Dorsolateral prefrontal cortex (tissue), 120 donors: ENCODE measurements at regions of chr2 and their contacts with region 1.

Region 1: DNA sequence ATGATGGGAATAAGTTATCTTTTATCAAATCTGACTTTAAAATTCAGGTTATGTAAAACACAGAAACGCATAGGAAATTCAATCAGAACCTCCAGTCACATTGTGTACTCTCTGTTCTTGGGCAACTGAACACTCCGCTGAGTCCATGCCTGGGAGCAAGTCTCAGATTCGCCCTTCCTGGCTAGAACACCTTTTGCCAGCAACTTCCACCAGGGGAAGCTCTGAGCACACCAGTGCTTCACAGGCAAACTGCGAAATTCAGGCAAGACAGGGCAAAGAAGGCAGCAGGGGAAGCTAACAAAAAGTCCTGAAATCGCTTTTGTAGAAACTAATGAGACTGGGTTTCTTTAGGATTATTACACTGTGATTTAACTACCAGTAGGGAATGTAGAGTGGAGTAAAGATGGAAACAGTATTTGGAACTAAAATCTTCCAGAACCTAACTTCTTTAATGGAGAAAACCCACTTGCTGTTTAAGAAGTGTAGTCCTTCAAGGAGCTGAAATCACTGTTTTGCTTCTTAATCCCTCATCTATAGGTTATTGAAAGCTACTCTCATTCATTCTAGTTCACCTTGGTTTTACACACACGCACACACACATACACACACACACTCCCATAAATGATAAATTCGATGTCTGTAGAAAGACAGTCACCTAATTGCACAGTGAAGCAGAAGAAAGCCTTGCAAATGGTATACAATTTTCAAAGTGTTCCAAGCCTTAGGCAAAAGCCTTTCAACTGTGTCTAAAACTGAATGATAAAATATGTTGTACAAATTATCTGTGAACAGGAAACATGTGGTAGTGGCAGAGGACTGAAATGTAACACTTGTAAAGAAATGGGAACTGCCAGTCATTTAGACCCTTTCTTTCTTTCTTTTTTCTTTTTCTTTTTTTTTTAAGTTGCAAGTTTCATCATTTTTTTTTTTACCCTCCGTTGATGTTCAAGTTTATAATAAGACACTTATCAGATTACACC is 214.5 kb downstream of the TMEM182 start:
- DNase-seq: peak in 9 of 10 donors; percentile 23 to 64 (median 55)
- H3K4me3 ChIP-seq: no peak overlapping the region
- H3K27ac ChIP-seq: peak overlapping the region in 4 of 59 donors; percentile 12 to 56 (median 35)
- H3K27me3 ChIP-seq: no peaks in the 10 kb centered on the region
- CTCF ChIP-seq: peak; percentile 19 to 76 (median 60)

Region 2: DNA sequence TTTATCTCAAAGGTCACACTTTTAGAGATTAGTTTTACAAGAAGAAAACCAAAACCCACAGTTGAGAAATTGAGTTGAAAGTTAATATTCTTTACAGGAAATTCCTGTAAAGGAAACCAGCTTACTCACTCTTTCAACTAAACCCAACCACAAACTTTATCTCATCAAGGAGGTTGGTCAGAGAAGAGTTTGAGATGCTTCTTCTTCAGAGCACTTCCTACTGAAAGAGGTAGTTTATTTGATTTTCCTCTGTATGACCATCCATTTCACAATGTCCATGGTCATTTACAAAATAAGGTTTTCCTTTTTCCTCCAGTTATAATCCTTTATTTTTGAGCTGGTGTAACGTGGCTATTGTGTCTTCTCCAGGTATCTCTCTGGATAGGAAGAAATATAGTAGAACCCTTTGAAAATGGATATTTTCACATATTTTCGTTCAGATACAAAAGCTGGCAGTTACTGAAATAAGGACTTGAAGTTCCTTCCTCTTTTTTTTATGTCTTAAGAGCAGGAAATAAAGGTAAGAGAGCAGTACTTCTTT is 557.8 kb before region 1 on chr2:
- intact Hi-C with region 1: no loop called
- DNase-seq: no peak
- H3K4me3 ChIP-seq: no peak overlapping the region
- H3K27ac ChIP-seq: no peak overlapping the region
- H3K27me3 ChIP-seq: peaks cover 0 to 16% (median 0%) of the 10 kb centered on the region in 45 donors
- CTCF ChIP-seq: no peak

Region 3: DNA sequence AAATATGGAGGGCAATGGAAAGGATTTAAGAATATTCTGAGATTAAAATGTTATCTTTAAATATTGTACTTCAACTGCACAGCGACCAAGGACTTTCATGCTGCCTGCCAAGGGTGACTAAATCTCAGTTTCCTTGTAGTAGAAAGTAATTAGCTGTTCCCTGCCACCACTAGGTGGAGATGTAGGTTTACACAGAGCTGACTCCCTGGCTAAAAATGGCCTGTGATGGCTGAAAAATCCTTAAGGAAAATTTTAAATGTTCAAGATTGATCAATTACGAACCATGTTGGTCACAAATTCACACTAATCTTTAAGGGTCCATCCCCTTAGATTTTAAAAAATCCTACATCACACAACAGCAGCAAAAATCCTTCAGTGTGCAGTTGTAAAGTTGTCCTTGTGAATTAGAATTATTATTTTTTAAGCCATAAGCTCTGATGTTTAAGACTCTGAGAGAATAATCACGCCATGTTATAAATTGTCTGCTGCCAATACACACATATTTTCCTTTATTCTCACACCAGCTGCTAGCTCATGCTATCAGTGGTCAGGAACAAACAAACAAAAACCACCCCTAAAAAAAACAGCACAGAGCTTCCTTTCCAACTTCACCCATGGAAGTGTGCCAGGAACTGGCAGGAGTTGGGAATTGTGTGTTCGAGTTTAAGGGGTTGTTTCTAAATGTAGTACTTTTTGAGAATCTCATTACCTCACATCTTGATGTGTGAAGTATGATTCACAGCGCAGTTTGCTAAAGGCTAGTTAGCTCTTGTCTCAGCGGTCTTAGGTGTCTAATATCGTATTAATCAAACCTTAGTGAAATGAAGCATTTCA is 185.4 kb after region 1 on chr2:
- intact Hi-C with region 1: loop called in 1 of 2 experiments (anchors 10 kb)
- DNase-seq: peak in 4 of 10 donors; percentile 18 to 44 (median 27)
- H3K4me3 ChIP-seq: peak overlapping the region in 1 of 59 donors; percentile 13
- H3K27ac ChIP-seq: no peak overlapping the region
- H3K27me3 ChIP-seq: peaks cover 0 to 5% (median 0%) of the 10 kb centered on the region in 45 donors
- CTCF ChIP-seq: peak; percentile 59 to 91 (median 81)